Ovary (tissue), 10 donors: ENCODE measurements at regions of chr19 and their contacts with region 1.

Region 1: GRCh38 chr19:45271735-45272108 is 20.7 kb downstream of the MARK4 start:
- DNase-seq: no peak
- H3K4me3 ChIP-seq: no peak overlapping the region
- H3K27ac ChIP-seq: no peak overlapping the region
- H3K4me1 ChIP-seq: peaks cover 3% of the 10 kb centered on the region
- H3K27me3 ChIP-seq: no peaks in the 10 kb centered on the region
- CTCF ChIP-seq: no peak
- EP300 ChIP-seq: no peak
- POLR2A ChIP-seq: no peak

Region 2: DNA sequence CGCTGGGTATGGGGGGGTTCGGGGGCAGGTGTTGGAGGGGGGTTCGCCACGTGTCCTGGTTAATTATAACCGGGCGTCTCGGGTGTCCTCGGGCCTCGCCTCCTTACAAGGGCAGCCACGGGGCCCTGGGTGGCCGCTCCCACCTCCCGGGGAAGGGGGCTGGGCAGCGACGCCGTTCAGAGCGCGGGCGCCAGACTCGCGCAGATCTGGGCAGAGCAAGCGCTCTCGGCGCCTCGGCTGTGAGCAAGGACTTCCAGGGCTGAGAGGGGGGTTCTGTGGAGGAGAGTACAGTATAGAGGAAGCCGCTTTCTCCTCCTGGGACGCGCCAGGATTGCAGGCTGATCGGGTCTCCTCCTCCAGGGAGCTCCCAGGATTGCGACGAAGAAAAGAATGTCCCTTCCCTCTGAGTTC is 52.0 kb after region 1 on chr19:
- intact Hi-C with region 1: loop called in 1 of 4 experiments (anchors 5 kb)
- DNase-seq: no peak
- H3K4me3 ChIP-seq: no peak overlapping the region
- H3K27ac ChIP-seq: no peak overlapping the region
- H3K4me1 ChIP-seq: peaks cover 1% of the 10 kb centered on the region
- H3K27me3 ChIP-seq: no peaks in the 10 kb centered on the region
- CTCF ChIP-seq: no peak
- EP300 ChIP-seq: no peak
- POLR2A ChIP-seq: no peak